ENCODE measurements at regions of chr17 and their contacts with region 1.

Region 1: GRCh38 chr17:77323413-77324171 is 182.8 kb downstream of the SEC14L1 start:
- DNase-seq: no peak
- ATAC-seq: no peak
- H3K4me3 Mint-ChIP-seq: no peak overlapping the region
- H3K27ac Mint-ChIP-seq: no peak overlapping the region
- H3K4me1 Mint-ChIP-seq: peaks cover 57% of the 10 kb centered on the region
- H3K27me3 Mint-ChIP-seq: no peaks in the 10 kb centered on the region

Region 2: DNA sequence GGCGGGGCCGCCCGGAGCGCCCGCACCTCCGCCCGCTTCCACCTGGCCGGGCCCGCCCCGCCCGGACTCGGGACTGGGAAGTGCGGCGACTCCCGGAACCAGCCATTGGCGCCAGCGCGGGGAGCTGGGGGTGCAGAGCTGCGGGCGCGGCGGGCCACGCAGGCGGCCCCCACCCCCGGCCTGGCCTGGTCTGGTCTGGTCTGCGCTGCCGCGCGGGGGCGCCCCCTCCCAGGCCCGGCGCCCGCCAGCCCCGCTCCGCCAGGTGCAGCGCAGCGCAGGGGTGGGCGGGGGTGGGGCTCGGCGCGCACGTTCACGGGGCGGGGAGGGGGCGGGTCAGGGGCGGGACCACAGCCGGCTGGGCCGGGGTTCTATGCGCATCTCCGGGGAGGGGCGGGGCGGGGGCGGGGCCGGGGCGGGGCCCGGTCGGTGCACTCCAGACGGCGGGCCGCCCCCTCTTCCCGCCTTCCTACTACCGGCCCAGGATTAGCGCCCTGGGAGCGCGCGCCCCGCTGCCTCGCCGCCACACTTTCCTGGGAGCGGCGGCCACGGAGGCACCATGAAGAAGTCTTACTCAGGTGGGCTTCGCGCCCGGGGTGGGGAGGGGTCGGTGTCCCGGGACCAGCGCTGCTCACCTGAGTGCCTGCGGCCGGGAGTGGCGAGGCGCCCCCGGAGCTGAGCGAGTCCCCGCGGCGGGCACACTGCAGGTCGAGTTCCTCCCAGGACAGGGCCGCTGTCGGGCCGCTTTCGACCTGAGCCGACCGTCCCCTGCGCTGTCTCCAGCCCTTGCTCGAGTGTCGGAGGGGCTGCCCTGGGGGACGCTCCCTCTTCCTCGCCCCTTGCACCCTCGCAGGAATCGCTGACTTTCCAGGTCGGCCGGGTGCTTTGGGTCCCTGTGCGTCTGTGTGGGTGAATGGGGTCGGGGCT is 42.4 kb before region 1 on chr17:
- CTCF ChIA-PET with region 1: interaction called, 3 read pairs
- POLR2A ChIA-PET with region 1: no interaction called
- intact Hi-C with region 1: loop called in 1 of 2 experiments (anchors 2 kb)
- DNase-seq: peak; percentile 79
- ATAC-seq: peak; percentile 90
- H3K4me3 Mint-ChIP-seq: peak overlapping the region; percentile 68
- H3K27ac Mint-ChIP-seq: peak overlapping the region; percentile 51
- H3K4me1 Mint-ChIP-seq: peaks cover 20% of the 10 kb centered on the region
- H3K27me3 Mint-ChIP-seq: peaks cover 14% of the 10 kb centered on the region

Measured in activated CD4-positive, alpha-beta T cell treated with anti-CD3 and anti-CD28 coated beads for 36 hours (primary cell).